WTC11 (cell line): ENCODE measurements at regions of chr3 and their contacts with region 1.

Region 1: DNA sequence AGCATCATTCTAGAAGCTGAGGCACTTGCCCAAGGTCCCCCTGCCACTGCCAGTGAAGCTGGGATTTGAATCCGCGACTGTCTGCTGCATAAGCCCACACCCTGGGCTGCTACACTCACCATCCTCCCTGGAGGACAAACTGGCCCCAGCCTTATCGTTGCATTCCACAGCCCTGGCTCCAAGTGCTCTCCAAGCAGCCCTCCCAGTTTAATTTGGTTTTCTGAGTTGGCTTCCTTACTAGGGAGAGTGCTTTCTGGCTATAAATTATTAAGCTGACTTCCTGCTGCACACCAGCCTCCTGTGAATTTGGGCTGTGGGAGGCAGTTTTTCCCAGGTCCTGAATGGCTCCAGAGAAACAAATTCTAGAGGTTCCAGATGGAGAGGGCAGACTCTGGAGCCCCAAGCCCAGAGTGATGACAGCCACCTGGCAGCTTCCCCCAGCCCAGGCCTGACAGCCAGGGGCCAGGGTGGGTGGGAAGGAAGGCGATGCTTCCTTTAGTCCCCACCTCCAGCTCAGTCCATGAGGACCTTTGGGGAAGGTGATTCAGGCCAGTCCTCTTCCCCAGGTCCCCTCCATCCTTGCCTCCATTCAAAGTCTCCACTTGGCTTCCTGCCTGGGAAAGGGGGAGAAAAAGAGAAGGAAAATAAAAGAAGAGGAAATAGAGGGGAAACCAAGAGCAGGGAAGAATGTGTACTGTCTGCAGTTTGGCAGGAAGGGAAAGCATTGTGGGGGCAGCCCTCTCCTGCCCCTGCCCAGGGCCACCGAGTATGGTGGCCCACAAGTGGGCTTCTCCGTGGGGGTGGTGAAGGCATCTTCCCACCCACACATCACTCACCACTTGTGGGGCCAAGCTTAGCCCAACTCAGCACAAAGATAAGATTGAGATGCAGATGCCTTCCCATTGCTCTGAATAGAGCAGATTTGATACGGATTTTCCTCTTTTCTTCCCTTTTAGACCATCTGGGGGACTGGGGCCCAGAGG is 69.6 kb downstream of the SEMA5B start:
- DNase-seq: no peak
- ATAC-seq: peak; percentile 7; the same call in 1 of the 2 replicates
- H3K4me3 Mint-ChIP-seq: no peak overlapping the region
- H3K27ac Mint-ChIP-seq: no peak overlapping the region
- H3K4me1 Mint-ChIP-seq: peaks cover 55% of the 10 kb centered on the region
- H3K27me3 Mint-ChIP-seq: no peaks in the 10 kb centered on the region
- CTCF ChIP-seq: no peak

Region 2: DNA sequence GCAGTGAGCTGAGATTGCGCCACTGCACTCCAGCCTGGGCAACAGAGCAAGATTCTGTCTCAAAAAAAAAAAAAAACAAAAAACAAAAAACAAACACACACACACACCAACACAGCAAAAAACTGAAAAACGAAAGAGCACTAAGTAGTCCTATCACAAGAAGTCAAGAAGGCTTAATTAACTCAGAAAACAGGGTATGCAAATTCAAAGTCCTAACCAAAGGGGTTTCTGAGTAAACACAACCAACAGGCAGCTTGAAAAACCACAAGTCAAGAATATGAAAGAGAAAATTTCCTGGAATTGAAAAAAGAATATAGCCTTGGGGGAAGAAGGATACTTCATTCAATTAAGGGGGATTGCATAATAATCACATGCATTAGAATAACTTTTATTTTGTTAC is 315.1 kb before region 1 on chr3:
- CTCF ChIA-PET with region 1: no interaction called
- POLR2A ChIA-PET with region 1: no interaction called
- DNase-seq: no peak
- ATAC-seq: no peak
- H3K4me3 Mint-ChIP-seq: no peak overlapping the region
- H3K27ac Mint-ChIP-seq: no peak overlapping the region
- H3K4me1 Mint-ChIP-seq: peaks cover 10% of the 10 kb centered on the region
- H3K27me3 Mint-ChIP-seq: peaks cover 19% of the 10 kb centered on the region
- CTCF ChIP-seq: no peak

Region 3: GRCh38 chr3:122902326-122902725 is 55.7 kb before region 1 on chr3:
- CTCF ChIA-PET with region 1: no interaction called
- POLR2A ChIA-PET with region 1: no interaction called
- DNase-seq: no peak
- ATAC-seq: no peak
- H3K4me3 Mint-ChIP-seq: no peak overlapping the region
- H3K27ac Mint-ChIP-seq: no peak overlapping the region
- H3K4me1 Mint-ChIP-seq: peaks cover 15% of the 10 kb centered on the region
- H3K27me3 Mint-ChIP-seq: no peaks in the 10 kb centered on the region
- CTCF ChIP-seq: no peak

Region 4: DNA sequence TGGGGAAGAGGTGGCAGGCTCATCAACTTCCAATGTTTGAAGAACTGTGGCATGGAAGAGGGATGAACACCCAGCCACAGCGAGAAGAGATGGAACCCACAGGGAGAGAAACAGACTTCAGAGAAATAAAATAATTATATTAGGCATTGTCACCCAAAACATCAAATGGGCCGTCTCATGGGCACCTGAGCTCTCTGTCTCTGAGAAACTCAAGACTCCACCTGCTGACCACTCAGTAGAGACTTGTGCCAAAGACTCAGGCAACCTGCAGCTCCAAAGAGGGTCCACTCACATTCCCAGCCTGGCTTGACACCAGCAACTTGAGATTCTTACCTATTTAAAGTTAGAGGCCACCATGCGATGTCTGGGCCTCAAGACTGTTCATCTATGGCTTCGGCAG is 57.6 kb after region 1 on chr3:
- CTCF ChIA-PET with region 1: interaction called, 25 read pairs
- POLR2A ChIA-PET with region 1: interaction called, 3 read pairs
- DNase-seq: no peak
- ATAC-seq: peak; percentile 70
- H3K4me3 Mint-ChIP-seq: no peak overlapping the region
- H3K27ac Mint-ChIP-seq: no peak overlapping the region
- H3K4me1 Mint-ChIP-seq: peaks cover 12% of the 10 kb centered on the region
- H3K27me3 Mint-ChIP-seq: no peaks in the 10 kb centered on the region
- CTCF ChIP-seq: no peak

Region 5: GRCh38 chr3:123122525-123123315 is 164.7 kb after region 1 on chr3:
- CTCF ChIA-PET with region 1: no interaction called
- POLR2A ChIA-PET with region 1: no interaction called
- DNase-seq: no peak
- ATAC-seq: no peak
- H3K4me3 Mint-ChIP-seq: no peak overlapping the region
- H3K27ac Mint-ChIP-seq: peak overlapping the region; percentile 41; the same call in 1 of the 2 replicates
- H3K4me1 Mint-ChIP-seq: peaks cover 24% of the 10 kb centered on the region
- H3K27me3 Mint-ChIP-seq: no peaks in the 10 kb centered on the region
- CTCF ChIP-seq: no peak